ENCODE measurements at regions of chr6 and their contacts with region 1.

Region 1: DNA sequence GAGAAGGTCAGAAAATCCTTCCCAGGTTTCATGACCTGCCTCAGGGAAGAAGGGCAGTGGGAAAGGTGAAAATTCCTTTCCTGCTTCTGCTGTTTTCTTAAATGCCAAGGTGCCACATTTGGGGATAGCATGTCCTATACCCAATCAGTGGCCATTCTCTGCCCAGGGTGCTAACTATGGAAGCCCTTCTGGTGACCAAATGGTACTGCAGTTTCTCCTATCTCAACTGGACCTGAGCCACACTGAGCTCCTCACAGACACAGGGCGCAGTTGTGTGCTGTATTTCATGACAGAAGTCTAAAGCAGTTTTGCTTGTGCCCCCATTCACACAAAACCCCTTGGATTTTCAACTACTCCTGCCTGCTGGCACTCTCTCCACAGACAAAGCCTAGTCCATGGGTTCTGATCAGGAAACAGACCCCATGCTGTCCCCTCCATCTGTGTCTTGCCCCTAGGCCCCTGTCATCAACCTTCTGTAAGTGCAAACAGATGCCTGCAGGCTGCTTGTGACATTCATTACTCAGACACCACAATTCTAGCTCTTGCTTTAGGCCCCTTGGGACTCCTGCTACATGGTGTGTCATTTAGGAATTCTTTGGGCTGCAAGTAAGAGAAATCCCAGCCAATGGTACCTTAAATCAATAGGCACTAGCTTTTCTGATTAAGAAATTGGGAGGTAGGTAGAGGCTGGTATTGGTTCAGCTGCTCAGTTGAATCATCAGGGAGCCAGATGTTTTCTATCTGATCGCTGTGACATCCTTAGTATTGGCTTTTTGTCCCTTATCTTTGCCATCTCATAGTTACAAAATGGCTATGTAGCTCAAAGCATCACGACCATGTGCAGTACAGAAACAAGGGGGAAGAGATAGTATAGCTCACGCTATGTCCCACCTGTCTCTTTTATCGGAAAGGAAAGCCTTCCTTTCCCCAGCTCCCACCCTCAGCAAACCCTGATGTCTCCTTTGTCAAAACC is 147.8 kb downstream of the CD83 start:
- DNase-seq: no peak
- ATAC-seq: peak; percentile 93
- H3K4me3 Mint-ChIP-seq: no peak overlapping the region
- H3K27ac Mint-ChIP-seq: no peak overlapping the region
- H3K4me1 Mint-ChIP-seq: no peaks in the 10 kb centered on the region; the same call in 1 of the 2 replicates
- H3K27me3 Mint-ChIP-seq: peaks cover 12% of the 10 kb centered on the region
- CTCF ChIP-seq: no peak; the same call in 1 of the 2 replicates

Region 2: DNA sequence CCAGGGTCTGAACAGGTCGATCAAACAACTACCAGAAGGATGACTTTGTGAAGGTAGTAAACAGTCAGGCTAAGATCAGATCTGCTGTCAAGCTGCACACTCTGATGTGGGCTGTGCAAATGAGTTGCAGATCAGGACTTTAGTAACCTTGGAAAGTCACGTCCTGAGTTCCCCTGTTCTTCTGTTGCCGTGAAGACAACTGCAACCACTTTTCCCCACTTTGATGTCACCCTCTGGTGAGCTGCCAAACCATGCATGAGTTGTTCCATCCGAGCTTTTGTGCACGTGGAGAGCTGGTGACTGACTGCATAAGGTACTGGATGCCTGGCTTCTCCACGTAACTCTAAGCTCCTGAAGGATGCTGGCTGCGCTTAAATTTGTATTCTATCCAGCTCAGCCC is 36.8 kb before region 1 on chr6:
- CTCF ChIA-PET with region 1: no interaction called
- POLR2A ChIA-PET with region 1: no interaction called
- DNase-seq: no peak
- ATAC-seq: no peak
- H3K4me3 Mint-ChIP-seq: no peak overlapping the region
- H3K27ac Mint-ChIP-seq: no peak overlapping the region
- H3K4me1 Mint-ChIP-seq: no peaks in the 10 kb centered on the region
- H3K27me3 Mint-ChIP-seq: peaks cover 13% of the 10 kb centered on the region
- CTCF ChIP-seq: no peak

Region 3: DNA sequence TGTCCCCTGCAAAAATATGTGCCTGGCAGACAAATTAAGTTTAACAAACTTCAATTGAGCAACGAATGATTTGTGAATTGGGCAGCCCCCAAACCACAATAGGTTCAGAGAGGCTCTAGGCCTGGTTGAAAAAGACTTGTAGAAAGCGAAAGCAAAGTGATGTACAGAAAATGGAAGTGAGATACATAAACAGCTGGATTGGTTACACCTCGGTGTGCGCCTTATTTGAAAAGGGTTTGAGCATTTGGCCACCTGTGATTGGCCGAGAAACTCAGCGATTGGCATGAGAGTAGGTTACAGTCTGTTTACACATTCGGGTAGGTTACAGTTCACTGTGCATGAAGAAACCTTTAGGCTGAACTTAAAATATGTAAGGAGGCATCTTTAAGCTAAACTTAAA is 10.8 kb before region 1 on chr6:
- CTCF ChIA-PET with region 1: interaction called, 11 read pairs
- POLR2A ChIA-PET with region 1: no interaction called
- DNase-seq: no peak
- ATAC-seq: no peak
- H3K4me3 Mint-ChIP-seq: no peak overlapping the region
- H3K27ac Mint-ChIP-seq: no peak overlapping the region
- H3K4me1 Mint-ChIP-seq: peaks cover 21% of the 10 kb centered on the region
- H3K27me3 Mint-ChIP-seq: peaks cover 4% of the 10 kb centered on the region; the same call in 1 of the 2 replicates
- CTCF ChIP-seq: no peak

Region 4: GRCh38 chr6:14292119-14292518 is 26.8 kb after region 1 on chr6:
- CTCF ChIA-PET with region 1: no interaction called
- POLR2A ChIA-PET with region 1: no interaction called
- DNase-seq: no peak
- ATAC-seq: peak; percentile 13; the same call in 1 of the 2 replicates
- H3K4me3 Mint-ChIP-seq: no peak overlapping the region
- H3K27ac Mint-ChIP-seq: 0 out of 2 replicates have a peak overlapping the region, but pooled peaks have one; percentile 57
- H3K4me1 Mint-ChIP-seq: peaks cover 77% of the 10 kb centered on the region
- H3K27me3 Mint-ChIP-seq: no peaks in the 10 kb centered on the region; the same call in 1 of the 2 replicates
- CTCF ChIP-seq: no peak